Heart right ventricle (tissue), 16 donors: ENCODE measurements at regions of chr3 and their contacts with region 1.

Region 1: DNA sequence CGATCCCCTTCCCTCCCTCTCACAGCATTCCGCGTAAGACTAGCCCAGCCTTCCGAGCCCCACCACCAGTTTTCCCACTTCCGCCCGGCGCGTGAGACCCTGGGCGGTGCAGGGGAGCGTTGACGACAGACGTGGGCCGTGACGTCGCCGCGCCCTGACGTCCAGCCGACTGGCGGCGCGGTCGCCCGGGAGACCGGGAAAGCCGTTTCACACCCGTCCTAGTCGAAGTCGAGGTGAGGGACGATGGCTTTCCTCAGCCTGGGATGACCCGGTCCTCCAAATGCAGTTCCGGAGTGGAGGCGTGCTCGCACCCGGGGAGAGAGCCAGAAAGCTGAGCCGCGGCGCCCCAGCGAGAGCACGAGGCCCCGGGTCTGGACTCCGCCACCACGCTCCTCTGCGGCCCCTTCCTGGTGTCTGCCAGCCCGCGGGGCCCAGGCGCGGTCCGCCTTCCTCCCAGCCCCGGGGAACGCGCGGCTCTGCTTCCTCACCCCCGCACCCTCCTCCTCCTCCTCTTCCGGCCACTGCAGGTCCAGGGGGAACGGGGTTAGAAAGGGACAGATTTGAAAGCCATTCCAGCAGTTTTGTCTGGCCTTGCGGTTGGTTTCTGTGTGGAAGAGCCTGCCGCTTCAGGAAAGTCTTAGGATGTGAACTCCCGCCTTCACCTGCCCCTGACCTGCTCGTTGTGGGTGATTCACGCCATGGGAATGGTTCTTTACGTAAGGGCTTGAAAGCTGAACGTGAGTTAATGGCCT is at the start of gene LEKR1:
- DNase-seq: peak; percentile 89 to 90
- ATAC-seq: peak; percentile 95 to 98 (median 97)
- H3K4me3 ChIP-seq: peak within 1 kb of the TSS; percentile 50 to 80 (median 71)
- H3K27ac ChIP-seq: peak within 1 kb of the TSS; percentile 85 to 95 (median 92)
- H3K4me1 ChIP-seq: peaks cover 0 to 13% (median 8%) of the 10 kb centered on the region in 9 donors
- H3K27me3 ChIP-seq: no peaks in the 10 kb centered on the region
- CTCF ChIP-seq: no peak
- total RNA-seq, gene LEKR1: 0.17 to 3.0 (median 0.92) TPM

Region 2: DNA sequence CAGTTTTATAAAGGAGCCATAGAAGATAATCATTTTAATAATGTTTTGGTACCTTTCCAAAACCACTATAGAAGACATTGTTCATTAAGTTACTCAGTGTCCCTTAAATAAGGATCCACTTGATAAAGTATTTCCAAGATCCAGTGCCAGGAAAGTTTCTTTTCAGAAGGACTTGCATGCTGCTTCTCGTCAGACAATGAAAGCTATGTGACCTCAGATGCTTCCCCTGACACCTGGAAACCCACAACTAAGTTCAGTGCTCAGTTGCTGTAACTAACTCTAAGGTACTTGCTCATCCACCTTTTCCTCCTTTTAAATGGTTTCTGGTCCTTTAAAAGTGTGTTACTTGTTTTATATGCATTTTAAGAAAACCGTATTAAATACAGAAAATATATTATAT is 278.7 kb before region 1 on chr3:
- intact Hi-C with region 1: loop called in 1 of 10 experiments (anchors 10 kb)
- DNase-seq: no peak
- ATAC-seq: peak in 6 of 8 donors; percentile 57 to 78 (median 65)
- H3K4me3 ChIP-seq: no peak overlapping the region
- H3K27ac ChIP-seq: peak overlapping the region in 9 of 10 donors; percentile 38 to 91 (median 59)
- H3K4me1 ChIP-seq: peaks cover 5 to 99% (median 81%) of the 10 kb centered on the region in 9 donors
- H3K27me3 ChIP-seq: no peaks in the 10 kb centered on the region
- CTCF ChIP-seq: no peak

Region 3: DNA sequence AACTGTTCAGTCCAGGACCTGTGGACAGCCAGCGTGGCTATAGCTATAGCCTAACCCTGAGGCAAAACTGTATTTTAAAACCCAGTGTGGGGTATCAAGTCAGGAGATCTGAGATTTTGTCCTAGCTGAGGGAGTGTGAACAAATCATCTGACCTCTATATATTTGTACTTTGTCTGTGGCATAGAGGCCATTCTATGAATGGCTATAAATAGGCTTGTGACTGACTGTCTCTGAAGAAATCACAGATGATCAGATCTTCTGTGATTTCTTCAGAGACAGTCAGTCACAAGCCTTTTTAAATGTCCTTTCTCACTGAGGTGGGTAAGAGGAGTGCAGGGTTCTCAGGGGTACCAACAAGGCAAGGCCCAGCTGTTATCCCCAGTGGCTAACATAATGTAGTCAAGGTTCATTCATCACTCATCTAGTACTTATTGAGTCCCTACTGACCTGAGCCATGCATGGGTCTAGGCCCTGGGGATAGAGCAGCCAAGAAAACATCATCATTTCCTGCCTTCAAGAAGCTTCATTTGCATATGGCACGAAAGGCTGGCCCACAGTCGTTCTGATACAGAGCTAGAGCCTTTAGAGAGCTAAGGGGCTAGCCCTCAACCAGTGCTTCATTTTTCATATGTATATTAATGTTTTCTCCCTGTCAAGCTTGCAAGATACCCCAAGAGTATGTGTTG is 98.7 kb before region 1 on chr3:
- intact Hi-C with region 1: loop called in 1 of 10 experiments (anchors 10 kb)
- DNase-seq: no peak
- ATAC-seq: peak in 1 of 8 donors; percentile 17
- H3K4me3 ChIP-seq: no peak overlapping the region
- H3K27ac ChIP-seq: no peak overlapping the region
- H3K4me1 ChIP-seq: peaks cover 0 to 17% (median 5%) of the 10 kb centered on the region in 9 donors
- H3K27me3 ChIP-seq: no peaks in the 10 kb centered on the region
- CTCF ChIP-seq: no peak

Region 4: GRCh38 chr3:157045238-157045850 is 219.0 kb after region 1 on chr3:
- intact Hi-C with region 1: no loop called
- DNase-seq: no peak
- ATAC-seq: peak in 5 of 8 donors; percentile 11 to 53 (median 49)
- H3K4me3 ChIP-seq: peak overlapping the region in 5 of 10 donors; percentile 5 to 28 (median 15)
- H3K27ac ChIP-seq: no peak overlapping the region
- H3K4me1 ChIP-seq: peaks cover 0 to 4% (median 0%) of the 10 kb centered on the region in 9 donors
- H3K27me3 ChIP-seq: peaks cover 0 to 4% (median 0%) of the 10 kb centered on the region in 7 donors
- CTCF ChIP-seq: no peak

Region 5: GRCh38 chr3:157136647-157137387 is 310.5 kb after region 1 on chr3:
- intact Hi-C with region 1: loop called in 6 of 10 experiments (anchors 5 to 10 kb)
- DNase-seq: peak in 1 of 2 donors; percentile 20
- ATAC-seq: peak; percentile 18 to 49 (median 32)
- H3K4me3 ChIP-seq: peak overlapping the region in 1 of 10 donors; percentile 41
- H3K27ac ChIP-seq: peak overlapping the region; percentile 15 to 77 (median 58)
- H3K4me1 ChIP-seq: peaks cover 0 to 60% (median 39%) of the 10 kb centered on the region in 9 donors
- H3K27me3 ChIP-seq: no peaks in the 10 kb centered on the region
- CTCF ChIP-seq: no peak

Region 6: DNA sequence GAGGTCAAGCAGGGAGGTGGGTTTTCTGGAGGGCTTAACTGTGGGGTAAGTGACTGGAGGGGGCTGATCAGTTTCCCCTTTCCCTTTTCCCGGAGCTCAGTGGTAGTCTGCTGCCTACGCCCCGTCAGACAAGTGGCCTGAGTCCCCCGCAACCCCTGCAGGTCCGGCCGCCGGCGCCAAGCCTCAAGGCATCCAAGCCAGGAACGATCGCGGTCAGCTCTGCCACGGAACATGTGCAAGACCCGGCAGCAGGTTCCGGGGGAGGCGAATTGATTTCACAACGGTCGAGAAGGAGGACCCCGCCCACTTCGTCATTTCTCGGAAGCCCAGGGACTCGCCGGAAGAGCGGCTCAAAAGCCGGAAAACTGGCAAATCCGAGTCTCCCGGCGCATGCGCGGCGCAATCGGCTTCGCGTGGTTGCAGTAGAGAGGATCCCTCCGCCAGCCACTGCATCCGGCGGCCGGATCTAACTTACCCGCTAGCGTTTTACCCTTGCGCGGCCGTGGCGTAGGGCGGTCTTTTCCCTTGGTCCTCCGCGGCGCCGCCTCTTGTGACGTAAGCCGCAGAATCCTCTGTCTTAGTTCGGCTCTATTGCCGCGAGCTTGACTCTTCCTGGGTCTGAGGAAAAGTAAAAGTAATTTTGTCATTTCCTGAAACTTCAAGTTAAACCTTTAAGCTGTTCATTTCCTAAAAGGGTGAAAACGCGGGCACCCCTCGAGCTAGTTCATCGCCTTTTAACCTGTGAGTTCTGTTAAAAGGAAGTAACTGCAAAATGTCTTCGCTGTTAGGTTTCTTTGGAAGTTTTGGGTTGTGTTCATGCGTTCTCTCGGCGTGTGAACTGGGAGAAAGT is 348.6 kb after region 1 on chr3:
- intact Hi-C with region 1: loop called in 1 of 10 experiments (anchors 10 kb)
- DNase-seq: peak; percentile 98 to 100
- ATAC-seq: peak; percentile 97 to 99 (median 98)
- H3K4me3 ChIP-seq: peak overlapping the region; percentile 43 to 72 (median 64)
- H3K27ac ChIP-seq: peak overlapping the region; percentile 92 to 98 (median 96)
- H3K4me1 ChIP-seq: peaks cover 5 to 31% (median 22%) of the 10 kb centered on the region in 9 donors
- H3K27me3 ChIP-seq: no peaks in the 10 kb centered on the region
- CTCF ChIP-seq: no peak